CD4-positive, alpha-beta memory T cell (primary cell): ENCODE measurements at regions of chr22 and their contacts with region 1.

Region 1: DNA sequence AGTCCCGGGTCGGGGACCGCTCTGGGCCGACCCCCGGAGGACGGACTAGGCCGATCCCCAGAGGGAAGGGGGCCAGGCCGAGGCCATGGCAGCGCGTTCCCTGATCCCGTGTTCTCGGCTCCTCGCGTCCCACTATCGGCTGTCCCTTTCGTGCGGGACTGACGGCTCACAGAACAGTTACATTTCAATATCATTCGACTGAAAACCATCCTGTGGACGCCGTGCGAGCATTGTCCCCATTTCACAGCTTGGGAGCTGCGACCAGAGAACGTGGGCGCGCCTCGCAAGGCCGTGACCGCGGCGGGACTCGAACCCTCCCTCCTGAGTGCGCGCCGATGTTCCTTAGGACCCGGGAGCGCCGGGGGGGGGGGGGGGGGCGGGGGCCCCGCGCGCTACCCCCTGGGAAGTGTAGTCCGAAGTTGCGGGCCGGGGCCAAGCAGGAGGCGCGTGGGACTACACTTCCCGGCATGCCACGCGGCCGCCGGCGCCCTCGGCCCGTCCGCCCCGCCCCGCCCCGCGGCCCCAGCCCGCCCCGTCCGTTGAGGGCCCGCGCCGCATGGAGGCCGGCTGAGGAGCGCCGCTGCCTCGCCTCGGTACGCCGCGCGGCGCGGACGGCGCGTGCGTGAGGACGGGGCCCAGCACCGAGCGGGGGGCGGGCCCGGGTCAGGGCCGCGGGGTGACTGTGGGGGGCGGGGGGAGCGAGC is at the start of gene TRABD:
- DNase-seq: peak; percentile 85 to 90 (median 87)
- H3K4me3 ChIP-seq: peak within 1 kb of the TSS; percentile 65 to 73
- H3K4me3 Mint-ChIP-seq: peak within 1 kb of the TSS; percentile 90 to 99 (median 96)
- H3K27ac ChIP-seq: peak within 1 kb of the TSS; percentile 68
- H3K27ac Mint-ChIP-seq: peak within 1 kb of the TSS; percentile 94 to 98 (median 97)
- H3K4me1 ChIP-seq: peaks cover 40% of the 10 kb centered on the region
- H3K4me1 Mint-ChIP-seq: peaks cover 9 to 41% (median 27%) of the 10 kb centered on the region in 4 donors
- H3K27me3 ChIP-seq: no peaks in the 10 kb centered on the region
- H3K27me3 Mint-ChIP-seq: peaks cover 0 to 2% of the 10 kb centered on the region in 2 donors
- total RNA-seq, gene TRABD: 124 to 126 TPM

Region 2: DNA sequence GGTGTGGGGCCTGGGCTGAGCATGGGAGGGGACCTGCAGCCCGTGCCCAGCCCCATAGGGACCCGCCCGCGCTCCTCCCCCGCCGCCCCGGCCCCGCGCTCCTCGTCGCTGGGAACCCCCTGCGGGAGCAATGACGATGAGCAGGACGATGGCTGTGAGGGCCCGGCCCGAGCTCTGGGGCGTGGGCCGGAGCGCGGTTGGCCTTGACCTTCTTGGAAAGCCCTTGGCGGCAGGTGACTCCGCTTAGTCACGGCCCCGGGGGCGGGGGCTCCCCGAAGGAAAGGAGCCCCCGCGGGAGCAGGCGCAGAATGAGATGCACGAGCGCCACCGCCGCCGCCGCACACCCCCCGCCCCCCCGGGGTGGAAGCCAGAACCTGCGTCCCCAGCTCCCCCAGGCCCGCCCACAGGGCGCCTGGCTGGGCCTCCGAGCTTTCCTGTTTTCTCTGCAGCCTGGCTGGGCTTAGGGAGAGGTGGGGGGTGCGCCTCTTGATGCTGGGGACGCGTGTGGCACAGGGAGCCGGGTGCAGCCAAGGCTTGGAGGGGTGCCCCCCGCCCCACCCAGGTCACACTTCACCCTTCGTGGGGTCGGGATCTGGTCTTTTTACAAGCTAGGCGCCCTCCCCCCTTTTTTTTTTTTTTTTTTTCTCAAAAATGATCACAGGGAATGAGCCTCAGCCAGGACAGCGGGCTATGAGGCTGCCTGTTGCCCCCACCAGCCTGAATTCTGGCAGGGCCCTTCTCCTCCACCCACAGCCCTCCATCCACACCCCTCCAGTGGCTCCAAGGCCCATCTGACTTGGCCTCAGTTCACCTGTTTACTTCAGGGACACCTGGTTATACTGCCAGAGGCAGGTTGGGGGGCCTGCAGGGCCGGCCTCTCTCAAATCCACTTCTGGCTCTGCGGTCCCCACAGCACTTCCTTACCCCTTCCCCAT is 249.3 kb before region 1 on chr22:
- CTCF ChIA-PET with region 1: no interaction called
- POLR2A ChIA-PET with region 1: no interaction called
- intact Hi-C with region 1: loop called (anchors 10 kb)
- DNase-seq: peak; percentile 89 to 98 (median 91)
- H3K4me3 ChIP-seq: peak overlapping the region in 1 of 2 donors; percentile 18
- H3K4me3 Mint-ChIP-seq: peak overlapping the region; percentile 45 to 74 (median 68)
- H3K27ac ChIP-seq: peak overlapping the region; percentile 90
- H3K27ac Mint-ChIP-seq: peak overlapping the region; percentile 88 to 95 (median 90)
- H3K4me1 ChIP-seq: peaks cover 46% of the 10 kb centered on the region
- H3K4me1 Mint-ChIP-seq: peaks cover 9 to 42% (median 17%) of the 10 kb centered on the region in 4 donors
- H3K27me3 ChIP-seq: no peaks in the 10 kb centered on the region
- H3K27me3 Mint-ChIP-seq: no peaks in the 10 kb centered on the region

Region 3: GRCh38 chr22:50200461-50201190 is 15.1 kb after region 1 on chr22 and contains the start of gene SELENOO:
- CTCF ChIA-PET with region 1: interaction called, 3 read pairs
- POLR2A ChIA-PET with region 1: interaction called, 73 read pairs
- intact Hi-C with region 1: loop called (anchors 1 kb)
- DNase-seq: peak; percentile 83 to 92 (median 88)
- H3K4me3 ChIP-seq: peak within 1 kb of the TSS; percentile 29 to 55
- H3K4me3 Mint-ChIP-seq: peak within 1 kb of the TSS; percentile 79 to 94 (median 86)
- H3K27ac ChIP-seq: peak within 1 kb of the TSS; percentile 78
- H3K27ac Mint-ChIP-seq: peak within 1 kb of the TSS in 6 of 7 donors; percentile 72 to 89 (median 80)
- H3K4me1 ChIP-seq: peaks cover 22% of the 10 kb centered on the region
- H3K4me1 Mint-ChIP-seq: peaks cover 14 to 29% (median 24%) of the 10 kb centered on the region in 4 donors
- H3K27me3 ChIP-seq: no peaks in the 10 kb centered on the region
- H3K27me3 Mint-ChIP-seq: no peaks in the 10 kb centered on the region
- total RNA-seq, gene SELENOO: 33.8 to 34.8 TPM

Region 4: GRCh38 chr22:50244420-50245213 is 59.1 kb after region 1 on chr22 and contains the start of gene TUBGCP6:
- CTCF ChIA-PET with region 1: interaction called, 5 read pairs
- POLR2A ChIA-PET with region 1: interaction called, 32 read pairs
- intact Hi-C with region 1: loop called (anchors 2 kb)
- DNase-seq: peak; percentile 89 to 93 (median 91)
- H3K4me3 ChIP-seq: peak within 1 kb of the TSS; percentile 37 to 99
- H3K4me3 Mint-ChIP-seq: peak within 1 kb of the TSS; percentile 95 to 100 (median 98)
- H3K27ac ChIP-seq: peak within 1 kb of the TSS; percentile 98
- H3K27ac Mint-ChIP-seq: peak within 1 kb of the TSS; percentile 90 to 100 (median 99)
- H3K4me1 ChIP-seq: peaks cover 69% of the 10 kb centered on the region
- H3K4me1 Mint-ChIP-seq: peaks cover 23 to 64% (median 37%) of the 10 kb centered on the region in 4 donors
- H3K27me3 ChIP-seq: no peaks in the 10 kb centered on the region
- H3K27me3 Mint-ChIP-seq: no peaks in the 10 kb centered on the region
- total RNA-seq, gene TUBGCP6: 132 to 133 TPM

Region 5: DNA sequence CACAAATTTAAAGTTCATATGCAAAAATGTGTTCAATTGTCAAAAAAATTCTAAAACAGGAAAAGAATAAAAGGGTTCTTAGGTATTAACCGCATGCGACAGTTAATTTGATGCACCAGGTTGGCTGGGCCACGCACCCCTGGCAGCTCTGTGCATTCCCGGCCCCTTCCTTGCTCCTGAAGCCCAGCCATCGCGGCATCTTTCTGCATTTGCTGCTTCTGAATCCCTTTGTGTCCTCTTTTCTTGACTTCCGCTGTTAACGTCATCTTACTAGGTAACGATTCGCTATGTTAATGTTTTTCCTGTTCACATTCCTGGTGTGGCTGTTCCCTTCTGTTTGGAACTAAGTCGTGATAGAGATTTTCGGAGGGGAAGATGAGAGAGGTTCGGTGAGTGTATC is 352.2 kb after region 1 on chr22:
- CTCF ChIA-PET with region 1: no interaction called
- POLR2A ChIA-PET with region 1: interaction called, 12 read pairs
- intact Hi-C with region 1: no loop called
- DNase-seq: no peak
- H3K4me3 ChIP-seq: no peak overlapping the region
- H3K4me3 Mint-ChIP-seq: peak overlapping the region in 6 of 8 donors; percentile 49 to 70 (median 60)
- H3K27ac ChIP-seq: peak overlapping the region; percentile 99
- H3K27ac Mint-ChIP-seq: peak overlapping the region; percentile 86 to 100 (median 96)
- H3K4me1 ChIP-seq: peaks cover 41% of the 10 kb centered on the region
- H3K4me1 Mint-ChIP-seq: peaks cover 25 to 61% (median 49%) of the 10 kb centered on the region in 4 donors
- H3K27me3 ChIP-seq: no peaks in the 10 kb centered on the region
- H3K27me3 Mint-ChIP-seq: no peaks in the 10 kb centered on the region